ENCODE measurements at regions of chr2 and their contacts with region 1.

Region 1: GRCh38 chr2:128178650-128179460 is 87.9 kb downstream of the UGGT1 start:
- DNase-seq: peak; percentile 54 to 73
- ATAC-seq: peak; percentile 94

Region 2: DNA sequence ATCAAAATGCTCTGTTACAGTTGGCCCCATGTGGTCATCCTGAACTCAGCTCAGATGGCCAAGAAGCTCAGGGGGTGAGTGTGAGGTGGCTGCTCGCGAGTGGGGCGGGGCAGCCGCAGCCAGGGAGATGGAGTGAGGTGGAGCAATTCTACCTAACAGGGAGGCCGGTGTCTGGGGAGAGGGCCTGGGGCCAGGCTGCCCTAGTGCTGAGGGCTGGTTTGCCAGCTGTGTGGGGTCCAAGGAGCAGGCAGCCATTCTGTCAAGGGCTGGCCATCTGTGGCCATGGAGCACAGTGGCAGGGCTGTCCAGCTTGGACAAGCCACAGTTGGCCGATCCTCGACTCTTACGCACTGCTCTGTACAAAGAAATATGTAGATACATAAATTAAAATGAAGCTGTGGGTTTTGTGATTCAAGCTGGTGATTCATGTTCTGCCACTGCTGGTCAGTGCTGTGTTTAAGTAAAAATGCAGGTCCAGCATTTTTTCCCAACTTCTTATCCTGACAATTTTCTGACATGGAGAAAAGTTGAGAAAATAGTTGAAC is 57.7 kb after region 1 on chr2:
- intact Hi-C with region 1: loop called in 1 of 2 experiments (anchors 5 kb)
- DNase-seq: no peak
- ATAC-seq: no peak